ENCODE measurements at regions of chr2 and their contacts with region 1.

Region 1: GRCh38 chr2:230987137-230988020 is 8.5 kb upstream of the SPATA3 start:
- DNase-seq: peak; percentile 87
- H3K27ac ChIP-seq: no peak overlapping the region
- CTCF ChIP-seq: peak; percentile 92

Region 2: GRCh38 chr2:230824406-230824978 is 162.9 kb before region 1 on chr2:
- CTCF ChIA-PET with region 1: interaction called, 19 read pairs
- POLR2A ChIA-PET with region 1: no interaction called
- DNase-seq: peak; percentile 59
- H3K27ac ChIP-seq: no peak overlapping the region
- CTCF ChIP-seq: peak; percentile 75

Region 3: DNA sequence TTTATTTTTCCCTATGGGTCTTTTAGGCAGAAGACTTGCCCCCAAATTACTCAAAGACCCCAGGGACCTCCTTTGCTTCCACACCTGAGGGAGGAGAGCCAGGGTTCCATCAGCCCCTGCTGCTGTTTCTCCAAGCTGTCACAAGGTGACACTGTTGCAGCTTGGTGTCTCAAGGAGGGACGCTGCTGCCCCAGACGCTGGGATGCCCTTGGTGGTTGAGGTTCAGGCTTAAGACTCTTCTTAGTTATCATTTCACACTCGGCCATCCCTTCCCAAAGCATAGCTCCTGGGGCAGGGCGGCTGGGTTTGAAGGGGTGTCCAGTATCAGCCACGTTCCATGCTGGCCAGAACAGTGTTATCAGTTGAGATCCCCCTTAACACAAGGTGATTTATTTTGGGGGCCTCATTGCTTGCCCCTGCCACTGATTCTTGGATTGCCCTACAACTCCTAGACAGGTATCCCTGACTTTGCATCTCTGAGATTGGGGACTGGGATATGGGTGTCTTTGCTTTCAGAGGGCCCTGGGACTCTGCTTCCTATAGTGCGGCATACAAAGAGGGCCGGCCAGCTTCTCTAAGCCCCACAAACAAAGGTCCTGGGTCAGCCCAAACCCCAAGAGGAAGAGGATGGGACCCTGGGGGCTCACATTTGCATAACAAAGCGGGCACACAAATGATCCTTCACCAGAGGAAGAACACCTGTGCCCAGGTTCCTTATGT is 85.0 kb before region 1 on chr2:
- CTCF ChIA-PET with region 1: interaction called, 45 read pairs
- POLR2A ChIA-PET with region 1: interaction called, 3 read pairs
- DNase-seq: peak; percentile 71
- H3K27ac ChIP-seq: no peak overlapping the region
- CTCF ChIP-seq: peak; percentile 81

Region 4: DNA sequence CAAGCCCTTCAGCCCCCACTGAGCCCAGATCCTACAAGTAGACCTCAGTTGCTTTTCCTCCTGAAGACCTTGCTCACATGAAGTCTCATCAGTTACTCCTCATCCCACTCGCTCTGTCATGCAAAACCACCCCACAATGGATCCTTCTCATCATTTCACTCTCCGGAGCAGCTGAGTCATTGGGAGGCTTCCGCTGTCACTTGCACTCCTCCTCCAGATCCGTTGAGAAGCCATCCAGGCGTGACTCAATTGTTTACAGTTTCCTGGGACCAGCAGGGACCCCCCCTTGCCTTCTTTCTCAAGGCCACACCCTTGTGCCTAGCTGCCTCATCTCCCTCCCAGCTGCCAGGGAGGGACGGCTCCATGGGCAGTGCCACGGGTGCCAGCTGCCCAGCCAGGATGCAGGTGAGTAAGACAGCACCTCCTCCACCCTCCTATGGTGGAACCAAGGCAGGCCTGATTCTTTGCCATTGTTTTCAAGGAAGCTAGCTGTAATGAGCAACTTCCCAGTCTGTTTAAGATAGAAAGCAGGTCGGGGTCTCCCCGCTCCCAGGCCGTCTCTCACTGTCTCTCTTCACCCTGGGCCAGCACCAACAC is 78.7 kb before region 1 on chr2:
- CTCF ChIA-PET with region 1: interaction called, 16 read pairs
- POLR2A ChIA-PET with region 1: no interaction called
- DNase-seq: peak; percentile 72
- H3K27ac ChIP-seq: peak overlapping the region; percentile 58
- CTCF ChIP-seq: no peak

Region 5: DNA sequence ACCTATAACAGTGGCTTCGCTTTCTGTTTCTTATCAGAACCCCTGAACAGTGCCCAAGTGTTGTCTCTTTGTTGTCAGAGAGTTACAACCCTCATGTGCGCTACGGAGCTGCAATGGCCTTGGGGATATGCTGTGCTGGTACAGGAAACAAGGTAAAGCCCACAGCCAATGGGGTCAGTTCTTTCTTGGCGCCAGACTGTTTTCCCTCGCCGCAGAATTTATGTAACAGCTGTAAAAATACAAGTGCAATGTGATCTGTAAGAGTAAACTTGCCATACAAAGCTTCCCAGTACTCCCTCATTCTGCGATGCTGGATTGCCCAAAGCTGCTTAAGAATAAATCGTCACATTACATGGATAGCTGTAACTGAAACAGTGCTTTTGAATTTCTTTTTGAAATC is 151.3 kb after region 1 on chr2:
- CTCF ChIA-PET with region 1: no interaction called
- POLR2A ChIA-PET with region 1: no interaction called
- DNase-seq: no peak
- H3K27ac ChIP-seq: no peak overlapping the region
- CTCF ChIP-seq: no peak